ENCODE measurements at regions of chr3 and their contacts with region 1.

Region 1: DNA sequence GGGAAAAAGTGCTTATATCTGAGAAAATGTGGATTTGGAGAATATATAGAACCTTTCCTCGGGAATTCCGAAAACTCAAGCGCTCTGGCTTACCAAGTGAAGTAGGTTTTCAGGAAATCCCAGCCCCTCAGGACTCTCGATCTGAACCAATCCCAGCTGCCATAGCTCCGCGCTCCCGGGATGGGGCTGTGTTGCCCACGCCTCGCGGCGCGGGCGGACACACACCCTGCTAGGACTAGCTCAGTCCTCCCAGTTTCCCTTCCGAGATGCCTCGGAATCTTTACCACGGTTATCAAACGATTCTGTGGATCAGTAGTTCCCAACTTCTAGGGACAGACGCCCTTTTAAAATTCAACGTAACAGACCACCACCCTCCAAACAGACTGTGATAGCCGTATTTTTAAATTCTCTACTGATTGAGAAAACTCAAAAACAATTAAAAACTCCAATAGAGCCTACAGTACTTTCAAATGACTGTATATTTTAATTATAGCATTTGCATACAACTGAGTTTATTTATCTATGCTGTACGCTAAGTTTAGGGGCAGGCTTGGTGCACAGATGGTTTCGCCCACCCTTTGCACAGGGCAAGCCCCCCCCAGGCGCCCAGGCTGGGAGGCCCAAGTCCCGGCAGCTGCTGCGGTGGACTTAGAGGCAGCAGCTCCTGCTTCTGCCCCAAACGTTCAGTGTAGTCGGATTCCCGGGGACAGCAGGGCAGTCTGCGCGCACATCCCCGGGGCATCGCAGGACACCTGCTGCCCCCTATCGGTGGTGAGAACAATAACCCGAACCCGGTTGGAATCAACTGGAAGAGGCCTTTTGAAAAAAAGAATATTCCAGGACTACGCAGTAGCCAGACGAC is 52.3 kb downstream of the CCDC54 start:
- DNase-seq: peak; percentile 44
- H3K4me3 Mint-ChIP-seq: peak overlapping the region; percentile 82
- H3K27ac Mint-ChIP-seq: peak overlapping the region; percentile 44
- H3K4me1 Mint-ChIP-seq: peaks cover 21% of the 10 kb centered on the region
- H3K27me3 Mint-ChIP-seq: peaks cover 45% of the 10 kb centered on the region

Region 2: GRCh38 chr3:107414325-107414964 is 15.1 kb before region 1 on chr3:
- intact Hi-C with region 1: loop called (anchors 2 kb)
- DNase-seq: no peak
- H3K4me3 Mint-ChIP-seq: no peak overlapping the region
- H3K27ac Mint-ChIP-seq: no peak overlapping the region
- H3K4me1 Mint-ChIP-seq: peaks cover 11% of the 10 kb centered on the region
- H3K27me3 Mint-ChIP-seq: peaks cover 7% of the 10 kb centered on the region

Region 3: GRCh38 chr3:107496855-107497254 is 67.3 kb after region 1 on chr3:
- intact Hi-C with region 1: no loop called
- DNase-seq: no peak
- H3K4me3 Mint-ChIP-seq: no peak overlapping the region
- H3K27ac Mint-ChIP-seq: no peak overlapping the region
- H3K4me1 Mint-ChIP-seq: peaks cover 7% of the 10 kb centered on the region
- H3K27me3 Mint-ChIP-seq: peaks cover 14% of the 10 kb centered on the region

Region 4: GRCh38 chr3:107969994-107970819 is 540.7 kb after region 1 on chr3:
- intact Hi-C with region 1: no loop called
- DNase-seq: no peak
- H3K4me3 Mint-ChIP-seq: no peak overlapping the region
- H3K27ac Mint-ChIP-seq: no peak overlapping the region
- H3K4me1 Mint-ChIP-seq: peaks cover 5% of the 10 kb centered on the region
- H3K27me3 Mint-ChIP-seq: peaks cover 6% of the 10 kb centered on the region

Measured in activated T-helper 1 cell treated with anti-CD3 and anti-CD28 coated beads, Interleukin-12 subunit alpha, Interleukin-12 subunit beta, Interleukin-2, Interleukin-4 antibody, amounts not matched to agents 30 ng/mL and 10 ng/mL and 1 ng/mL, durations not matched to agents 14 hours and 24 hours and 36 hours (primary cell).